ENCODE measurements at regions of chr2 and their contacts with region 1.

Region 1: DNA sequence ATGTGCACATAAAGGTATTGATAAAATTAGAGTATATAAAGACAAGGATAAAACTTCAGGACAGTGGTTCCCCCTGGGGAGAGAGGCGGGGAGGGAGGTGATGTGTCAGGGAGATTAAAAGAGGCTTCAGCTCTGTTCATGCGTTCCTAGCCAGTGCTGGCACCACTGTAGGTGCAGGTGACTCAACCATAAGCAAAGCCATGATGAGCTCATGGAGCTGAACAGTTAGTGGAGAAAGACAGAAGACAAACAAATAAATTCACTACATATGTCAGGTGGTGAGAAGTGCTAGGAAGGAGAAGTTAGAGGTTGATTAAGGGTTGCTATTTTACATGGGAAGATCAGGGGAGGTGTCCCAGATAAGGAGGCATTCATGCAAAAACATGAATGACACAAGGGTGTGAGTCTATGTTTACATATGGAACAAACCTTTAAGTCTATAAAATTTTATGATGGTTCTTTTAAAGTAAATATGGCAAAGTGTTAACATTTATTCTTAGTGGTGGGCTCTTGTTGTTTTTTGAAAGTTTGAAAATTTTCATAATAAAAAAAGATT is 136.0 kb downstream of the ANKRD44 start:
- DNase-seq: no peak
- H3K4me3 Mint-ChIP-seq: no peak overlapping the region
- H3K27ac Mint-ChIP-seq: no peak overlapping the region
- H3K4me1 Mint-ChIP-seq: peaks cover 48% of the 10 kb centered on the region
- H3K27me3 Mint-ChIP-seq: no peaks in the 10 kb centered on the region

Region 2: DNA sequence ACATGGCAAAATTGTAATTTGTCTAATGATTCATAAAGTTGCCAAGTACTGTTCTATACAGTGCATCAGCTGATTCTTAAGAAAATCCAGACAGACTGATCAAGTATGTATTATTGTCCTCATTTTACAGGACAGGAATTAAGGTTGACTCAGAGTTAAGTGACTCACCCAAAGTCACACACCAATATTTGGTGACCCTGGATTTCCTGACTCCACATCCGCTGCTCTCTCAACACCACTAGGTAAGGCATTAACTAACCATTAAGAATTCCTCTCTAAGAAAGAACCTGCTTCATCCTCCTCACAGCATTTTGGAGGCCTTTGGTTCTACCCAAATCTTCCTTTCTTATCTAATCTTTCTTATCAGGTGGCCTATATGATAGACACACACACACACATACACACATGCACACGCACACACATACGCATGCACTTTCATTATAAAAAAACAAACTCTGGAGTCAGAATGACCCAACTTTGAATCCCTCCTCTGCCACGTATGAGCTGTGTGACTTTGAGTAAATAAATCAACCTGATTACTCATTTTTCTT is 14.9 kb before region 1 on chr2:
- CTCF ChIA-PET with region 1: interaction called, 3 read pairs
- intact Hi-C with region 1: loop called (anchors 1 kb)
- DNase-seq: peak; percentile 39
- H3K4me3 Mint-ChIP-seq: no peak overlapping the region
- H3K27ac Mint-ChIP-seq: peak overlapping the region; percentile 79
- H3K4me1 Mint-ChIP-seq: peaks cover 76% of the 10 kb centered on the region
- H3K27me3 Mint-ChIP-seq: no peaks in the 10 kb centered on the region

Region 3: DNA sequence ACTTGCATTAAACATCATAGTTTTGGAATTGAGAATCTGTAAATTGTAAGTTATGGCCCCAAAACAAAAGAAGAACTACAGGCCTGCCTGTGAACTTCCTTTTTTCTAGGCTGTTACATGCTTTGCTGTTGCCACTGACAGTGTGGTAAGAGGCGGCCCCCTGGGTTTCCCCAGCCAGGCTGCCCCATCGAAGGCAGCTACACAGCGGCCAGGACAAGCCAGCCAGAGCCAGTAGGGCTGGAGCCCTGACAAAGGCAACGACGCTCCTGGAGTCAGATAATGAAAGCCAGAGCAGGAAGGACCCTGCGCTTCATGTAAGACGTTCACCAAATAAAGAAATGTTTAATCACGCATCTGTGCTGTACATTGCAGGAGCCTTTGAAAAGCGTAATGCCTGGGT is 80.9 kb after region 1 on chr2:
- CTCF ChIA-PET with region 1: no interaction called
- intact Hi-C with region 1: no loop called
- DNase-seq: peak; percentile 87
- H3K4me3 Mint-ChIP-seq: peak overlapping the region; percentile 75
- H3K27ac Mint-ChIP-seq: peak overlapping the region; percentile 97
- H3K4me1 Mint-ChIP-seq: peaks cover 75% of the 10 kb centered on the region
- H3K27me3 Mint-ChIP-seq: no peaks in the 10 kb centered on the region

Measured in activated naive CD4-positive, alpha-beta T cell treated with anti-CD3 and anti-CD28 coated beads for 36 hours (primary cell).